ENCODE measurements at regions of chr1 and their contacts with region 1.

Region 1: GRCh38 chr1:113072757-113073478 is at the start of gene LRIG2:
- DNase-seq: peak; percentile 96
- ATAC-seq: peak; percentile 96
- H3K4me3 Mint-ChIP-seq: peak within 1 kb of the TSS; percentile 97
- H3K27ac Mint-ChIP-seq: peak within 1 kb of the TSS; percentile 90
- H3K4me1 Mint-ChIP-seq: peaks cover 21% of the 10 kb centered on the region
- H3K27me3 Mint-ChIP-seq: no peaks in the 10 kb centered on the region
- total RNA-seq, gene LRIG2: 15.3 to 21.4 TPM

Region 2: GRCh38 chr1:112955781-112956543 is 117.0 kb before region 1 on chr1 and contains the start of gene SLC16A1:
- POLR2A ChIA-PET with region 1: interaction called, 13 read pairs
- DNase-seq: peak; percentile 93
- ATAC-seq: peak; percentile 77
- H3K4me3 Mint-ChIP-seq: peak within 1 kb of the TSS; percentile 86
- H3K27ac Mint-ChIP-seq: peak within 1 kb of the TSS; percentile 99
- H3K4me1 Mint-ChIP-seq: peaks cover 42% of the 10 kb centered on the region
- H3K27me3 Mint-ChIP-seq: no peaks in the 10 kb centered on the region
- total RNA-seq, gene SLC16A1: 31.4 to 35.4 TPM

Region 3: DNA sequence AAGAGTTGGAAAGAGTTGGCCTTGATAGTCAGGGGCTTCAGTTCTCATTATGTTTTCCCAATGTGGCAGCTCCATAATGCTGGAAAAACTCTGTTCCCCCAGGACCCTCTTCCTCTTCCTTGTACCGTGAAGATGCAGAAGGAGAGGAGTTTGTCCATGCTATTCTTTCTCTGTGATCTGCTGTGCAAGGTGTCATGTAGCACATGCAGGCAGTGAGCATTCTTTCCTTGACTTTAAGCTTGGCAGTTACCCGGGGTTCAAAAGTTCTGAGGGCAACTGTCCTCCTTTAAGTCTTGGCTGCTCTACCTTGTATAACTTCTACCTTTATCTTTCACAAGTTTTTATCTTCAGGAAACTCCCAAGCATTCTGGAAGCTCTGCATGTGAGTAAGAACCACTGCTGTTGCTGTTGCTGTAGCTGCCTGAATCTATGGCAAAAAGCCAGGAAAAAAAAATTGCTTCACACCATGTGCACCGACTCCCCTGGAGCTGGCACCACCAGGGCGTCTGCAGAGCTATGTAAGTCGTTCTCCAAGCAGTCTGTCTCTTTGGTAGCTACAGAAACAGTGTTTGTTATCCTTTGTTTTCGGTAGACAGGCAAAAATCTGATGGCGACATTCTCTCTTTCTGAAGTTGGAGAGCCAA is 74.2 kb before region 1 on chr1:
- POLR2A ChIA-PET with region 1: no interaction called
- DNase-seq: no peak
- ATAC-seq: no peak
- H3K4me3 Mint-ChIP-seq: no peak overlapping the region
- H3K27ac Mint-ChIP-seq: no peak overlapping the region
- H3K4me1 Mint-ChIP-seq: no peaks in the 10 kb centered on the region
- H3K27me3 Mint-ChIP-seq: no peaks in the 10 kb centered on the region

Region 4: DNA sequence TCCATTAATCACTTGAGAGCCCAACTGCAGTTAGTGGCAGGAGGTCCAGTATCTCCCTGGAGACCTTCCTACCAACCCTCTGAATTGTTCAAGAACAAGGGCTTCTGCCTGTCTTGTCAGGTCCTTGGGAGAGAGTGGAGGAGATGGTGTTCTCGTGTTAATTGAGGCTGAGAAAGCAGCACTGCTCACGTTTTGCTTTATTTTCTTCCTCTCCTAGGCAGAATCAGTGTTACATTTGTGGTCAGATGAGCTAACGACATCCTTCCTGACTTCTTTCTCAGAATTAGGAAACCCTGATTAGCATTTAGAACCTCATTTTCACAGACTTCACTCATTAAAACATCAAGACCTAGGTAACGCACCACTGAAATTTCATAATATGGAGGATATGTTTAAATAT is 26.3 kb before region 1 on chr1:
- POLR2A ChIA-PET with region 1: interaction called, 12 read pairs
- DNase-seq: no peak
- ATAC-seq: peak; percentile 91
- H3K4me3 Mint-ChIP-seq: peak overlapping the region; percentile 73
- H3K27ac Mint-ChIP-seq: peak overlapping the region; percentile 85
- H3K4me1 Mint-ChIP-seq: peaks cover 52% of the 10 kb centered on the region
- H3K27me3 Mint-ChIP-seq: no peaks in the 10 kb centered on the region

Measured in activated naive CD8-positive, alpha-beta T cell treated with anti-CD3 and anti-CD28 coated beads, Interleukin-2, amount 10 ng/mL, durations not matched to agents 7 days and 5 days (primary cell).